Activated CD4-positive, alpha-beta T cell treated with anti-CD3 and anti-CD28 coated beads for 36 hours (primary cell): ENCODE measurements at regions of chr11 and their contacts with region 1.

Region 1: DNA sequence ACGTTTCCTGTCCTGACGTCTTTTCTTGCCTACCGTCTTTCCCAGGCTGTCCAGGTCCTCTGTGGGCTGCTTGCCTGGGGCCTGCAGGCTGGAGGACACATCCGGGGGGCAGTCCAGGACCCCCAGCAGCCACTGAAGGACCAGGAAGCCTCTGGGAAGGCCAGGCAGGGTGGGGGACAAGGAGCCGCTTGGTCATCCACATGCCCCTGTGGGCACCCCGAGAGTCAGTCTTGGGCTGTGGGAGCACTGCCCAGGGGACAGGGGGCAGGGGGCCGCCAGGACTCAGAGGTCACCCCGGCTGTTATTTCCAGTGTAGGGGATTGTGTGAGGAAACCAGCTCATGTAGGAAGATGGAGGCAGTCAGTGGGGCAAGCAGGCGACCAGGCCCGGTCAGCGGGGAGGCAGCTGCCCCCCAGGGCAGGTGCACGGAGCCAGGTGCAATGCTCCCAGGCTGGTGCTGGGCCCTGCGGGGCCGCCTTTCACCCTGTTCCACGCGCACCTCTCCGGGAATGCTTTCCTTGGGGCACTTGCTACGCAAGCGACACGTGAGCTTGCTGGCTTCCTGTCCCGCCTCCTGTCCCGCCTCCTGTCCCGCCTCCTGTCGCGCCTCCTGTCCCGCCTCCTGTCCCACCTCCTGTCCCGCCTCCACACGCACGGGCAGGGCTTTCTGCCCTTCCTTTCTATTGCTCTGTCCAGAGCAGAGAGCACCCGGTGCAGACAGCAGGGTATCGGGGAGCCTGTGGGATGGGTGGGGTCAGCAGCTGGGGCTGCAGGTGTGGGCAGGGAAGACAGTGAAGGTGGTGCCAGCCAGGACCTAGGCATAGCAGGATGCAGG is 39.5 kb downstream of the MUC5B start:
- DNase-seq: peak; percentile 96
- ATAC-seq: peak; percentile 84
- H3K4me3 Mint-ChIP-seq: peak overlapping the region; percentile 70
- H3K27ac Mint-ChIP-seq: peak overlapping the region; percentile 84
- H3K4me1 Mint-ChIP-seq: peaks cover 14% of the 10 kb centered on the region
- H3K27me3 Mint-ChIP-seq: no peaks in the 10 kb centered on the region

Region 2: DNA sequence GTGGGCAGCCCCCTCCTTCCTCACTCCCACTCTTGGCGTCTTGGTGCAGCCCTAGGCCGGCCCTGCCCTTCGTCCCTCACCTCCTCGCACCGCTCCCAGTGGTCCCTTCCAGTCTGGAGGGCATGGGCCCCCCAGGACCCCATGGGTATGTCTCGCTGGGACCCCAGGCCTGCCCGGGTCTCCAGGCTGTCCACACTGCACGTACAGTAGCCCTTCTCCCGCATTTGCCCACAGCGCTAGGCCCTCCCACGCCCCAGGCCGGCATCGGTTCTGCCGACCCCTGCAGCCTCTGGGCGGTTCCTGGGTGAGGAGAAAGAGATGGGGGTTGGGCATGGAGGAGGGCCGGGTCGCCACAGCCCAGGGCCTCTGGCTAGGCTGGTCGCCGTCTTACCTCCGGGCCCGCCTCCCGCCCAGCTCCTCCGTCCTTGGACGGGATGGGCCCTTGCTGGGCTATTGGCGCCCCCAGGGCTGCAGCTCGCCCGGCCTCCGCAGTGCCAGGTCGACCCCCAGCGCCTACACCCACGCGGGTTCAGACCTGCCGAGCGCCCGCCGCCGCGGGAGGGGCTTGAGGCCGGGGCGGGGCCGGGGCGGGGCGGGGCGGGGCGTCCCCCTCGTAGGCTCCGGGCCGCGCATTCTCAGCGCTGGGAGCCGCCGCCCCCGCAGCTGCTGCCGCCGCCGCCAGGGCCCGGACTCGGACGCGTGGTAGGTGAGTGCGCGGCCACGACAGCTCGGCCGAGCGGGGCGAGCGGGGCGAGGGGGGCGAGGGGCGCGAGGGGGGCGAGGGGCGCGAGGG is 429.9 kb before region 1 on chr11 and contains the start of gene CD151:
- CTCF ChIA-PET with region 1: no interaction called
- POLR2A ChIA-PET with region 1: no interaction called
- intact Hi-C with region 1: loop called in 1 of 2 experiments (anchors 5 kb)
- DNase-seq: peak; percentile 75
- ATAC-seq: peak; percentile 55
- H3K4me3 Mint-ChIP-seq: peak within 1 kb of the TSS; percentile 69
- H3K27ac Mint-ChIP-seq: peak within 1 kb of the TSS; percentile 31
- H3K4me1 Mint-ChIP-seq: peaks cover 34% of the 10 kb centered on the region
- H3K27me3 Mint-ChIP-seq: peaks cover 31% of the 10 kb centered on the region
- total RNA-seq, gene CD151: 36.8 to 38.6 TPM

Region 3: DNA sequence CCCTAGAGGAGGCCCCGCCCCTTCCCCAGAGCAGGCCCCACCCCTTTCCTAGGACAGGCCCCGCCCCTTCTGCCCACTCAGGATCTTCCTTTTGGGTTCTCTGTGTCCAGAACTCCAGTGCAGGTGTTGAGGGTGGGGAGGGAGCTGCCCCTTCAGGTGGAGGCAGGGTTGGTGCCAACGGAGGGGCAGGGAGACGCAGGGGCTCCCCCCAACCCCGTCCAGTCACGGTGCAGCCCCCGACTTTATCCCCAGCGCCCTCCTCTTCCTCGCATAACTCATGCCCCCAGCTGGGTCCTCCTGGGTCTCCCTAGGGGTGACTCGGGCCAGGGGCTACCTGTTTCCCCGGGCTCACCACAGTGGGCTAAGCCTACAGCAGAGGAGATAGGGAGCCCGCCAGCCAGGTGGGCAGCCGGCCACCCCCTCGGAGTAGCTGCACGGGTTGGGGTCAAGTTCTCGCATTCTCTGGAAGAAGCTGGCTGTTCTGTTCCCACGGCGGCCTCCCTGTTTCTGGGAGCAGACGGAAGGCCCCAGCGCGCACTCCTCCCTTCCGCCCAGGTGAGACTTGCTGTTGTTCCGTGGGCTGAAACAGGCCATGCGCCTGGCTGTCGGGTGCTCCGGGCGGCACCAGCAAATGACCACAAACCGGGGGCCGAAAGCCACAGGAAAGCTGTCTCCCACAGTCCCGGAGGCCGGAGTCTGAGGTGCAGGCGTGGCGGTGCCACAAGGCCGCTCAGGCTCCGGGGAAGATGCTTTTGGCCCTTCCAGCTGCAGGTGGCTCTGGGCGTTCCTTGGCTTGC is 148.8 kb before region 1 on chr11:
- CTCF ChIA-PET with region 1: interaction called, 3 read pairs
- POLR2A ChIA-PET with region 1: no interaction called
- intact Hi-C with region 1: loop called in 1 of 2 experiments (anchors 2 kb)
- DNase-seq: peak; percentile 32
- ATAC-seq: peak; percentile 37
- H3K4me3 Mint-ChIP-seq: no peak overlapping the region
- H3K27ac Mint-ChIP-seq: no peak overlapping the region
- H3K4me1 Mint-ChIP-seq: no peaks in the 10 kb centered on the region
- H3K27me3 Mint-ChIP-seq: no peaks in the 10 kb centered on the region

Region 4: DNA sequence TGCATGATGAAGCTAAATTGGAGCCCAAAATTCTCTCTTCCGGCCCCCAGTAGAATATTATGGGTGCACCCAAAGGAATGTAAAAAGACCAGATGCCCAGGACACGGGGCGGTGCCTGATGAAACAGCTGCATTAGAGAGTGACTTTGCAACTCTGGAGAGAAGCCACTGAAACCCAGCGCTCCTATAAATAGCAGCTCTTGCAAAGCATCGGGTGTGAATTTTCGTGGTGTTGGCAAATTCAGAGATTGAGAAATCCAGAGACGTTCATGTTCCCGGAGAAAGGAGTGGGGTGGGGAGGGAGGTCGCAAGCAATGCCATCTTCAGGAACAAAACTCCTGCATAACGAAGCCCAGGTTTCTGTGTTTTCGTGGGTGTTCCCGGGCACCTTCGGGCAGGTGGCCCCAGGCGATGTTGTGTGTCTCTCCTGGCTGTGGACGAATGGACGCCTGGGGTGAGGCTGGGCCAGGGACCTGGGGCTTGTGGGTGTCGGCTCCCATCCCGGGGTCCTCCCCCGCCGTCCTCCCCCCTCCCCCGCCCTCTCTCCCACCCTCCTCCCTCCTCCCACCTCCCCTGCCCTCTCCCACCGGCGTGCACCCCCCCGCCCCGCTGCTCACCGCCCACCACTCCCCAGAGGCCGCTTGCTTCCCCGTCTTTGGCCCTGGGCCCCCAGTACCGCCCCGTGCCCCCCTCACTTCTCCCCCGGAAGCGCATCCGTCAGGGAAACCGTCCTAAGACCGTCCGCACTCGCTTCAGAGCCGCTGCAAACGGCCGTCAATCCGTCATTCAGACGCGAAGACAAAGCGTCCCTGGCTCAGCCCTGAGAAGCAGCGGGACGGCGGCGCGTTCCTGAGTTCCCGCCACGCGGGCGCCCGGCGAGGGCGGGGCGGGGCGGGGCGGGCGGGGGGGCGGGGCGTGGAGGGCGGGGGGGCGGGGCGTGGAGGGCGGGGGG is 73.7 kb after region 1 on chr11:
- CTCF ChIA-PET with region 1: no interaction called
- POLR2A ChIA-PET with region 1: no interaction called
- intact Hi-C with region 1: loop called (anchors 1 to 2 kb)
- DNase-seq: peak; percentile 78
- ATAC-seq: peak; percentile 76
- H3K4me3 Mint-ChIP-seq: peak overlapping the region; percentile 71
- H3K27ac Mint-ChIP-seq: peak overlapping the region; percentile 66
- H3K4me1 Mint-ChIP-seq: peaks cover 15% of the 10 kb centered on the region
- H3K27me3 Mint-ChIP-seq: peaks cover 3% of the 10 kb centered on the region

Region 5: DNA sequence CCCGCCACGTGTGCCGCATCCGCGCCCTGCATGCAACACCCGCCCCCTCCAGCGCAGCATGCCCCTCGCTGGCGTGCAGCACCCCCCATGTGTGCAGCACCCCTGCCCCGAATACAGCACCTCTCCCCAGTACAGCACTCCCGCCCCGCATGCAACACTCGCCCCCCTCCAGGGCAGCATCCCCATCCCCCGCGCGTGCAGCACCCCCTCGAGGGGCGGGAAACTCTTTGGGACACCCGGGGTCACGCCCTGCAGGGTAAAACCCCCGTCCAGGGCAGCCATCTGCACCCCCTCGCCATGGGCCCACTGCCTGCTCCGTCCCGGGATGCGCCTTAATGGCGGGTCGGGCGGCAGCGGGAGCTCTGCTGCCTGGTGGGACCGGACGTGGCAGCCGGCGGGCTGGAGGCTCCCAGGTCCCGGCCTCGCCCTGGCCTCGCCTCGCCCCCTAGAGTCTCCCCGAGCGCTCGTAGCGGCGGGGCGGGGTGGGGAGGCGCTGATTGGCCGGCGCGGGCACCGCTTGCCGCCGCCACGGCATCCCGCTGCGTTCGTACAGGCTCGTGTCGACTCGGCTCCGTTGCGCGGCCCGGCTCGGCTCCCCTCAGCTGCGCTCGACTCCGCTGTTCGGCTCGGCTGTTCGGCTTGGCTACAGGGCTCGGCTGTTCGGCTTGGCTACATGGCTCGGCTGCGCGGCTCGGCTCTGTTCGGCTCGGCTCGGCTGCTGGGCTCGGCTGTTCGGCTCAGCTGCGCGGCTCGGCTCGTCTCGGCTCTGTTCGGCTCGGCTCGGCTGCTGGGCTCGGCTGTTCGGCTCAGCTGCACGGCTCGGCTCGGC is 126.9 kb after region 1 on chr11:
- CTCF ChIA-PET with region 1: no interaction called
- POLR2A ChIA-PET with region 1: no interaction called
- intact Hi-C with region 1: loop called (anchors 1 to 10 kb)
- DNase-seq: peak; percentile 99
- ATAC-seq: peak; percentile 99
- H3K4me3 Mint-ChIP-seq: peak overlapping the region; percentile 53
- H3K27ac Mint-ChIP-seq: no peak overlapping the region
- H3K4me1 Mint-ChIP-seq: peaks cover 9% of the 10 kb centered on the region
- H3K27me3 Mint-ChIP-seq: peaks cover 25% of the 10 kb centered on the region

Region 6: DNA sequence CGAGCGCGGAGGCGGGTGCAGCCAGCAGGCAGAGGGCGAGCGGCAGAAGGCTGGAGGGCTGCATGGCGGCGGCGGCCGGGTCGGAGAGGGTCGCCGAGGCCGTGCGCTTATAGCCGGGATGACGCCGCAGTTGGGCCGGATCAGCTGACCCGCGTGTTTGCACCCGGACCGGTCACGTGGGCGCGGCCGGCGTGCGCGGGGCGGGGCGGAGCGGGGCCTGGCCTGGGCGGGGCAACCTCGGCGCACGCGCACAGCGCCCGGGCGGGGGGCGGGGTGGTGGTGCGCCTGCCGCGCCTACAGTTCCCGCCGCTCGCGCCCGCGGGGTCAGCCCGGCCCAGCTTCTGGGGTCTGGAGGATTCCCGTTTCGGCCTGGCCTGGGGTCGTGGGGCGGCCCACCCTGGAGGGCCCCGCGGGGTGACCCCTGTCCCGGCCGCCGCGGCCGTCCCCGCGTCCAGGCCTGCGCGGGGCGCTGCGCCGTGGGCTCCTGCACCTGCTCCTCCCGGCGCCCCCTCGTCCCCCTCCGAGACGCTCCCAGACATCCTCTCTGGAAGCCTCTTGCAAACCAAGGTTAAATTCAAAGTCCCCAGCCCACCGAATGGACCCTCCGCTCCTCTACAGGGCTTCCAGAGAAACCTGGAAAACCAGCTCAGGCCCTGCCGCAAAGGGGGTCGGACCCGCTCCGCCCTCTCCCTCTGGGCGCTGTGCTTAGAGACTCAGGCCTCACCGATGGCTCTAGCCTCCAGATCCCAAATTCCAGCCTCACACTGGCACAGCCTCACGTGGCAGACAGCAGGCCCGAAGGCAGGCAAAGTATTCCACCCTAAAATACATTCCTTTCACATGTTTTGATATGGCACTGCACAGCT is 501.6 kb after region 1 on chr11 and contains the start of gene CTSD:
- CTCF ChIA-PET with region 1: no interaction called
- POLR2A ChIA-PET with region 1: no interaction called
- intact Hi-C with region 1: loop called in 1 of 2 experiments (anchors 5 kb)
- DNase-seq: peak; percentile 94
- ATAC-seq: peak; percentile 91
- H3K4me3 Mint-ChIP-seq: peak within 1 kb of the TSS; percentile 83
- H3K27ac Mint-ChIP-seq: peak within 1 kb of the TSS; percentile 58
- H3K4me1 Mint-ChIP-seq: peaks cover 35% of the 10 kb centered on the region
- H3K27me3 Mint-ChIP-seq: no peaks in the 10 kb centered on the region
- total RNA-seq, gene CTSD: 38.8 to 41.5 TPM